ENCODE measurements at regions of chrX and their contacts with region 1.

Region 1: GRCh38 chrX:43958529-43958928 is 14.7 kb downstream of the NDP start:
- DNase-seq: peak in 2 of 5 donors; percentile 21 to 29
- ATAC-seq: peak in 3 of 4 donors; percentile 63 to 84 (median 78)
- H3K4me3 ChIP-seq: no peak overlapping the region
- H3K27ac ChIP-seq: no peak overlapping the region
- H3K4me1 ChIP-seq: no peaks in the 10 kb centered on the region
- H3K27me3 ChIP-seq: peaks cover 0 to 56% (median 0%) of the 10 kb centered on the region in 9 donors
- CTCF ChIP-seq: peak; percentile 27 to 74 (median 64)
- POLR2A ChIP-seq: no peak

Region 2: GRCh38 chrX:44025555-44025954 is 67.0 kb after region 1 on chrX:
- intact Hi-C with region 1: loop called in 7 of 10 experiments (anchors 2 to 10 kb)
- DNase-seq: no peak
- ATAC-seq: no peak
- H3K4me3 ChIP-seq: no peak overlapping the region
- H3K27ac ChIP-seq: no peak overlapping the region
- H3K4me1 ChIP-seq: no peaks in the 10 kb centered on the region
- H3K27me3 ChIP-seq: peaks cover 0 to 30% (median 0%) of the 10 kb centered on the region in 9 donors
- CTCF ChIP-seq: no peak
- POLR2A ChIP-seq: no peak

Region 3: GRCh38 chrX:44244008-44244407 is 285.5 kb after region 1 on chrX:
- intact Hi-C with region 1: loop called in 5 of 10 experiments (anchors 5 to 10 kb)
- DNase-seq: no peak
- ATAC-seq: no peak
- H3K4me3 ChIP-seq: no peak overlapping the region
- H3K27ac ChIP-seq: no peak overlapping the region
- H3K4me1 ChIP-seq: no peaks in the 10 kb centered on the region
- H3K27me3 ChIP-seq: peaks cover 0 to 76% (median 0%) of the 10 kb centered on the region in 9 donors
- CTCF ChIP-seq: peak in 10 of 12 donors; percentile 13 to 55 (median 35)
- POLR2A ChIP-seq: no peak

Region 4: GRCh38 chrX:44382871-44383270 is 424.3 kb after region 1 on chrX:
- intact Hi-C with region 1: loop called in 1 of 10 experiments (anchors 10 kb)
- DNase-seq: no peak
- ATAC-seq: no peak
- H3K4me3 ChIP-seq: no peak overlapping the region
- H3K27ac ChIP-seq: no peak overlapping the region
- H3K4me1 ChIP-seq: no peaks in the 10 kb centered on the region
- H3K27me3 ChIP-seq: peaks cover 0 to 14% (median 0%) of the 10 kb centered on the region in 9 donors
- CTCF ChIP-seq: no peak
- POLR2A ChIP-seq: no peak

Region 5: DNA sequence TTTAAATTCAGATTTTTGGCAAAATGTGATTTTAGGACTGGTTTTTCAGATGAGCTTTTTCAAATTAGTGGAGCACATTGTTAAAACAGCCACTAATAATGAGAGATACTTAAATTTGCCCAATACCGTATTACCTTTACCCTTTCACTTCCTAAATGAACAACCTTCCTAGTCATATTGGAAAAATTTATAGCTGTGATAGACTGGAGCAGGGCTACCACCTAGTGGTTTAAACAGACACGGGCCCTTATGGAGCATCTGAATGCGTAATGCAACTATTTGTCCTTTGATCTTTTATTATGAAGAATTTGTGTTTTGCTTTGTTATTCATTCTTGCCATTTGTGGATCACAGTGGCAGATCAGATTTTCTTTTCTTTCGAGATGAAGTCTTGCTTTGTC is 987.2 kb after region 1 on chrX:
- intact Hi-C with region 1: loop called in 1 of 10 experiments (anchors 10 kb)
- DNase-seq: no peak
- ATAC-seq: no peak
- H3K4me3 ChIP-seq: no peak overlapping the region
- H3K27ac ChIP-seq: no peak overlapping the region
- H3K4me1 ChIP-seq: peaks cover 0 to 32% (median 3%) of the 10 kb centered on the region in 12 donors
- H3K27me3 ChIP-seq: no peaks in the 10 kb centered on the region
- CTCF ChIP-seq: peak in 5 of 12 donors; percentile 14 to 49 (median 17)
- POLR2A ChIP-seq: no peak

Region 6: DNA sequence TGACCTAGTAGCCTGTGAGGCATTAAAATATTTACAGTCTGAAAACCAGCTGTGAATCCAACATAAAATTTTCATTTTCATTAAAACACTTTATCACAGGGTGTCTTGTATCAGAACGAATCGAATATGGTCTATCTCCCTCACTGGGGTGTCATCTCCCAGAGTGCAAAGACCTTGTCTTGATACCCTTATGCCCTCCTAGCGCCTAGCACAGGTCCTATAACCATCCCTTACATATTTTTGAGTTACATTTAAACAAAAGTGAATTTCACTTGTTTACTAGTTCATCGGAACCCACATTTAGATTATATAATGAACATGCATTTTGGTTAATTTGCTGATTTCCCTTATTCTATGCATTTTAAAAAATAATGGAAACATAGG is 1228.1 kb after region 1 on chrX:
- intact Hi-C with region 1: loop called in 2 of 10 experiments (anchors 5 to 10 kb)
- DNase-seq: no peak
- ATAC-seq: peak in 1 of 4 donors; percentile 14
- H3K4me3 ChIP-seq: peak overlapping the region in 8 of 12 donors; percentile 38 to 57 (median 46)
- H3K27ac ChIP-seq: peak overlapping the region in 5 of 12 donors; percentile 24 to 55 (median 42)
- H3K4me1 ChIP-seq: peaks cover 0 to 15% (median 4%) of the 10 kb centered on the region in 12 donors
- H3K27me3 ChIP-seq: peaks cover 0 to 14% (median 0%) of the 10 kb centered on the region in 9 donors
- CTCF ChIP-seq: no peak
- POLR2A ChIP-seq: no peak